ENCODE measurements at regions of chr4 and their contacts with region 1.

Region 1: DNA sequence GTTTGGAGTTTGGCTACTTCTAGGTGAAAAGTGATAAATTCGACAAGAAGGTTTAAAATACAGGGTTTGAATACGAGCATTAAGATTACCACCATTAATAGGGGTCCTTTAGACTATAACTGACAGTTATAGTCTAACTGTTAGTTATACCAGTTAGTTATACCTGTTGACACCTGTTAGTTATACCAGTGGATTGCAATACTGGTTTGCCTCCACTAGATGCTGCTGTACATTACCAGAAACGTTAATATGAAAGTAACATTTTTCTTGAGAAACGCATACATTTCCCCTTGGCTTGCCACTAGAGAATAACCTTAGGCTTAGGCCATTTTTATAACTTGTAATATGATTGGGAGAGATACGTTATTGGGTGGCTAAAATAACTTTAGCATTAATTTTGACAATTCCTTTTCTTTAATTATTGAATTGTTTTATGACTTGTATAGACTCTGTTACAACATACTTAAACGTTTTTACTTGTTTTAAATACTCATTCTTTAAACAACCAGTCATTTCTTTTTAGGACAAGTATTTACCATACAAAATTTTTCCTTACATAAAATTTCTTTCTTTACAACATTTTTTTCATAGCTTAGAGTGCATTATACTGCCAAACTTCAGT is 911.2 kb downstream of the FSTL5 start:
- DNase-seq: peak; percentile 23
- ATAC-seq: peak; percentile 72
- H3K4me3 ChIP-seq: no peak overlapping the region
- H3K27ac ChIP-seq: no peak overlapping the region
- H3K4me1 ChIP-seq: no peaks in the 10 kb centered on the region
- H3K27me3 ChIP-seq: no peaks in the 10 kb centered on the region
- CTCF ChIP-seq: peak; percentile 68
- EP300 ChIP-seq: no peak
- POLR2A ChIP-seq: no peak
- RAD21 ChIP-seq: no peak

Region 2: GRCh38 chr4:161148063-161148462 is 104.6 kb before region 1 on chr4:
- CTCF ChIA-PET with region 1: no interaction called
- POLR2A ChIA-PET with region 1: no interaction called
- in situ Hi-C with region 1: no loop called
- intact Hi-C with region 1: no loop called
- DNase-seq: no peak
- ATAC-seq: no peak
- H3K4me3 ChIP-seq: no peak overlapping the region
- H3K27ac ChIP-seq: no peak overlapping the region
- H3K4me1 ChIP-seq: no peaks in the 10 kb centered on the region
- H3K27me3 ChIP-seq: no peaks in the 10 kb centered on the region
- CTCF ChIP-seq: no peak
- EP300 ChIP-seq: no peak
- POLR2A ChIP-seq: no peak
- RAD21 ChIP-seq: no peak

Region 3: GRCh38 chr4:162170509-162170908 is 917.9 kb after region 1 on chr4:
- CTCF ChIA-PET with region 1: interaction called, 7 read pairs
- POLR2A ChIA-PET with region 1: no interaction called
- in situ Hi-C with region 1: no loop called
- intact Hi-C with region 1: loop called (anchors 5 kb)
- DNase-seq: no peak
- ATAC-seq: no peak
- H3K4me3 ChIP-seq: no peak overlapping the region
- H3K27ac ChIP-seq: no peak overlapping the region
- H3K4me1 ChIP-seq: no peaks in the 10 kb centered on the region
- H3K27me3 ChIP-seq: no peaks in the 10 kb centered on the region
- CTCF ChIP-seq: no peak
- EP300 ChIP-seq: no peak
- POLR2A ChIP-seq: no peak
- RAD21 ChIP-seq: no peak

Region 4: DNA sequence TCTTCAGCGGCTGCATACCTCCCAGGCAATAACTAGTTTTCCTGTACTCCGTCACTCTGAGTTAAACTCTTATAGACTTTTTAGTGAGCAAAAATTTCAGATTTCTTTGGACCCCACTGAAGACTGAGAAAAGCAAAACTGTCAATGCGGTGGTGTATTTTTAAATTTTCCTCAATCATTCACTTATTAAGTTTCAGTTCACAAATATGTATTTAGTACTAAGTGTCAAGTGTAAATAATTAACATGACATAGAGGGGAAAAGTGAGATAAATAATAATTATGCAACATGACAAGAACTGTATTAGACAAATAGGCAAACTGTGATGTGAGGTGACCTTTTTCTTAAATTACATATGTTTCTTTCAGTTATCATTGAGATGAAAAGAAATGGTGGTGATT is 1789.7 kb after region 1 on chr4:
- CTCF ChIA-PET with region 1: no interaction called
- POLR2A ChIA-PET with region 1: no interaction called
- in situ Hi-C with region 1: no loop called
- intact Hi-C with region 1: loop called (anchors 10 kb)
- DNase-seq: no peak
- ATAC-seq: no peak
- H3K4me3 ChIP-seq: no peak overlapping the region
- H3K27ac ChIP-seq: no peak overlapping the region
- H3K4me1 ChIP-seq: no peaks in the 10 kb centered on the region
- H3K27me3 ChIP-seq: no peaks in the 10 kb centered on the region
- CTCF ChIP-seq: no peak
- EP300 ChIP-seq: no peak
- POLR2A ChIP-seq: no peak
- RAD21 ChIP-seq: no peak